ENCODE measurements at regions of chr3 and their contacts with region 1.

Region 1: DNA sequence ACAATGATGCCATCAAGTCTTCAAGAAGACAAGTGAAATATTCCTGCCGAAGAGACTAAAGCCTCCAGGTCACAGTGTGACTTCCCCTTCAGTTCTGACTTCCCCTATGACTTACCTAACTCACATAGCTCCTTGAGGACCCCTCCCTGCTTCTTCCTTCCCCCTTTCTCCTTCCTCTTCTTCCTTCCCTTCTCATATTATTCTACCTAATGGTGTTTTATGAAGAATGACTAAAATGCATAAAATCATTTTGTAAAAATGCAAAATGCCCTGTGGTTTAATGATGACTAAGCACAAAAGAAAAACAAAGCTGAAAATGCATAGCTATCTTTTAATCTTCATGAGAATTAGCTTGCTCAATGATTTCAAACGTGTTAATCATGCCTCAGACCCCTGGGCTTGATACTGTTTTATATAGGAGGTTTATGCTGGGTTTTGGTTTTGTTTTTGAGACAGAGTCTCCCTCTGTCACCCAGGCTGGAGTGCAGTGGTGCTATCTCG is 26.1 kb upstream of the TM4SF4 start:
- DNase-seq: peak; percentile 46
- H3K4me3 ChIP-seq: no peak overlapping the region
- H3K27me3 ChIP-seq: no peaks in the 10 kb centered on the region
- CTCF ChIP-seq: no peak

Region 2: GRCh38 chr3:149466192-149466591 is 17.8 kb after region 1 on chr3:
- CTCF ChIA-PET with region 1: interaction called, 3 read pairs
- POLR2A ChIA-PET with region 1: interaction called, 10 read pairs
- DNase-seq: peak; percentile 67
- H3K4me3 ChIP-seq: no peak overlapping the region
- H3K27me3 ChIP-seq: no peaks in the 10 kb centered on the region
- CTCF ChIP-seq: no peak

Region 3: GRCh38 chr3:150132101-150132749 is 683.8 kb after region 1 on chr3:
- CTCF ChIA-PET with region 1: no interaction called
- POLR2A ChIA-PET with region 1: no interaction called
- DNase-seq: no peak
- H3K4me3 ChIP-seq: no peak overlapping the region
- H3K27me3 ChIP-seq: no peaks in the 10 kb centered on the region
- CTCF ChIP-seq: no peak

Measured in BJ (cell line).